Mammary epithelial cell (primary cell): ENCODE measurements at regions of chr3 and their contacts with region 1.

Region 1: GRCh38 chr3:151439652-151440129 is 21.2 kb downstream of the IGSF10 start:
- DNase-seq: peak; percentile 60
- H3K4me3 ChIP-seq: no peak overlapping the region
- H3K27ac ChIP-seq: no peak overlapping the region
- H3K4me1 ChIP-seq: no peaks in the 10 kb centered on the region
- H3K27me3 ChIP-seq: no peaks in the 10 kb centered on the region
- CTCF ChIP-seq: peak; percentile 73 to 80

Region 2: DNA sequence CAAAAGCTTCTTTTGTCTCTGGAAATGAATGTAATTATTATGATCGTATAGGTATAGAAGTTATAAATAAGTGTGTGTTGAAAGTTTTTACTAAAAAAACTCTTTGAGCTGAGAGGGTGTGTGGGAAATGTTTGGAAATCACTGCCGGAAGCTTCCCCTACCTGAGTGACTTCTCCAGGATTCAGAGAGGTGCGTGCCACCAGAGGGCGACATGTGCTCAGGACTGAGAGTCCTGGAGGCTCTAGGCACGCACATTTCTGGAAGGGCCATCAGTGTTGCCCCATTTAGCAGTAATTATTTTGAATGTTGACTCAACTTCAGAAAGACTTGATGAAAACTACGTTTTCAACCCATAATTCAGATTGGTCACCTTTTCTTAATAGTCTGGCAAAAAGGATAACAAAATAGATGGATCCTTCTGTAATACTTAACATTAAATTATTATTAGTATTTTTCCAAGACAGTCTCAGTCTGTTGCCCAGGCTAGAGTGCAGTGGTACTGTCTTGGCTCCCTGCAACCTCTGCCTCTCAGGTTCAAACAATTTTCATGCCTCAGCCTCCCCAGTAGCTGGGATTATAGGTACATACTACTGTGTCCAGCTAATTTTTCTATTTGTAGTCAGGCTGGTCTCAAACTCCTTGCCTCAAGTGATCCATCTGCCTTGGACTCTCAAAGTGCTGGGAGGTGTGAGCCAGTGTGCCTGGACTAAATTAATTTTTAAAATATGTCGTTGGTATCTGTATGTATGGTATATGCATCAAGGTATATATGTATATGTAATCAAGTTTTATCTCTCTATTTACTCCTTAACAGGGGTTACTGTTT is 271.2 kb before region 1 on chr3:
- CTCF ChIA-PET with region 1: no interaction called
- dilution Hi-C with region 1: no loop called
- in situ Hi-C with region 1: no loop called
- intact Hi-C with region 1: loop called (anchors 10 kb)
- DNase-seq: peak; percentile 48
- H3K4me3 ChIP-seq: no peak overlapping the region
- H3K27ac ChIP-seq: no peak overlapping the region
- H3K4me1 ChIP-seq: peaks cover 2% of the 10 kb centered on the region
- H3K27me3 ChIP-seq: no peaks in the 10 kb centered on the region
- CTCF ChIP-seq: peak; percentile 81 to 94

Region 3: GRCh38 chr3:151227807-151228665 is 211.7 kb before region 1 on chr3:
- CTCF ChIA-PET with region 1: no interaction called
- dilution Hi-C with region 1: no loop called
- in situ Hi-C with region 1: no loop called
- intact Hi-C with region 1: loop called (anchors 2 kb)
- DNase-seq: peak; percentile 63
- H3K4me3 ChIP-seq: no peak overlapping the region
- H3K27ac ChIP-seq: no peak overlapping the region
- H3K4me1 ChIP-seq: peaks cover 27% of the 10 kb centered on the region
- H3K27me3 ChIP-seq: no peaks in the 10 kb centered on the region
- CTCF ChIP-seq: peak; percentile 91 to 94

Region 4: GRCh38 chr3:151290673-151291072 is 149.0 kb before region 1 on chr3:
- CTCF ChIA-PET with region 1: no interaction called
- dilution Hi-C with region 1: no loop called
- in situ Hi-C with region 1: no loop called
- intact Hi-C with region 1: loop called (anchors 2 kb)
- DNase-seq: no peak
- H3K4me3 ChIP-seq: no peak overlapping the region
- H3K27ac ChIP-seq: no peak overlapping the region
- H3K4me1 ChIP-seq: no peaks in the 10 kb centered on the region
- H3K27me3 ChIP-seq: no peaks in the 10 kb centered on the region
- CTCF ChIP-seq: peak; percentile 48 to 57

Region 5: GRCh38 chr3:151452841-151453240 is 13.2 kb after region 1 on chr3:
- CTCF ChIA-PET with region 1: no interaction called
- dilution Hi-C with region 1: no loop called
- in situ Hi-C with region 1: no loop called
- intact Hi-C with region 1: no loop called
- DNase-seq: no peak
- H3K4me3 ChIP-seq: no peak overlapping the region
- H3K27ac ChIP-seq: no peak overlapping the region
- H3K4me1 ChIP-seq: no peaks in the 10 kb centered on the region
- H3K27me3 ChIP-seq: peaks cover 12% of the 10 kb centered on the region
- CTCF ChIP-seq: no peak

Region 6: DNA sequence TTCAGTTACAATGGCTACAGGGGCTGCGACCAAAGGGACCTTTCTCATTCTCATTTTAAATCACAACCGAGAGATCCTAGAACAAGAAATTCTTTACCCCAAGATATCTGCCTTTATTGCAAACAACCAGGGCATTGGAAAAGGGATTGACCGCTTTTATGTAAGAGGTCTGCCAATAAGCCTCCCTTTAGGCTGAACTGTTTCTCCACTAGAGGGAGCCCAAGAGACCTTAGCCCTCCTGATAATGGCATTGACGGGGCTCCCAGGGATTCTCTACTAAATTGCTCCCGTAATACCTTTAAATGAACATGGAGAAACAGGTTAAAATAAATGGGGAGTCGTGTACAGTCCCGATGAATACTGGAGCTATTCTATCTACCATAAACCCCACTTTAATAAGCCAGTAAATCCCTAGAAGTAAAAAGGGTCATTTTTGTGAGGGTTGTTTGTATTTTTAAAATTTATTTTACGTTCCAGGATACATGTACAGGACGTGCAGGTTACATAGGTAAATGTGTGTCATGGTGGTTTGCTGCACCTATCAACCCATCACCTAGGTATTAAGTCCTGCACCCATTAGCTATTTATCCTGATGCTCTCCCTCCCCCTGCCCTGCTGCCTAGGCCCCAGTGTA is 28.7 kb after region 1 on chr3:
- CTCF ChIA-PET with region 1: no interaction called
- dilution Hi-C with region 1: no loop called
- in situ Hi-C with region 1: no loop called
- intact Hi-C with region 1: loop called (anchors 2 kb)
- DNase-seq: peak; percentile 35
- H3K4me3 ChIP-seq: no peak overlapping the region
- H3K27ac ChIP-seq: no peak overlapping the region
- H3K4me1 ChIP-seq: no peaks in the 10 kb centered on the region
- H3K27me3 ChIP-seq: peaks cover 4% of the 10 kb centered on the region
- CTCF ChIP-seq: peak; percentile 91

Region 7: DNA sequence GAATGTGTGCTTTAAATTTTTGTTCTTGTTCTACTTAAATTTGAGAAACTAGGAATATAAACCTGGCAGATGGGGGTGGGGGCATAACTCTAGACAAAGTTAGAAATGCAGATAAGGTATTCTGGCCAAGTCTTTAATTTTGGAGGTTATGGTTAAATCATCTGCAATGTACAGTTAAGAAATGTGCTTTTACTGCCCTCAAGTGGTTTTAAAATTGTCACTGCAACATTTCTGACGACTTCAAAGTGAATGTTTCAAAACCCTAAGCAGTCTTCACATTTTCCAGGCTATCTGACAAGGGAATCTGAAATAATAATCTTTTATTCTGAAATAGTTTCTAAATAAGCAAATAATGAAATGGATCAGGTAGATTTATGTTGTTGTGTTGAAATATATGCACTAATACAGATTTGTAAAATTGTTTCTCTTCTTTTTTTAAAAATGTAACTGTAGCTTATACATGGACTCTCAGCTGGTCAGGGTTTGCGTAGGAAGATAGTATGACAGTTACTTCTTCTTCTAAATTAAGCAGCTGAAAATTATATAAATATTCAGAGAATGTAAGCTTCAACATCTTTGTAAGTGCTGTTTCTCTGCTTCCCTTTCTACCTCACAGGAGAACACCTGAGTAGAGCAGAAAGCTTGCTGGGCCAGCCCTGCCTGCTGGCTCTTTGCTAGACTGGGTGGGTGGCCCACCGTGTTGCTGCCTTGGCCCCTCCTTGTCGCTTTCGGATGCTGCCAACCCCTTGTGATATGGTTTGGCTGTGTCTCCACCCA is 478.8 kb after region 1 on chr3:
- CTCF ChIA-PET with region 1: no interaction called
- dilution Hi-C with region 1: no loop called
- in situ Hi-C with region 1: loop called (anchors 10 kb)
- intact Hi-C with region 1: loop called (anchors 1 kb)
- DNase-seq: peak; percentile 26
- H3K4me3 ChIP-seq: no peak overlapping the region
- H3K27ac ChIP-seq: no peak overlapping the region
- H3K4me1 ChIP-seq: no peaks in the 10 kb centered on the region
- H3K27me3 ChIP-seq: no peaks in the 10 kb centered on the region
- CTCF ChIP-seq: peak; percentile 63 to 67

Region 8: GRCh38 chr3:152466784-152467183 is 1027.1 kb after region 1 on chr3:
- CTCF ChIA-PET with region 1: no interaction called
- dilution Hi-C with region 1: no loop called
- in situ Hi-C with region 1: no loop called
- intact Hi-C with region 1: loop called (anchors 10 kb)
- DNase-seq: no peak
- H3K4me3 ChIP-seq: no peak overlapping the region
- H3K27ac ChIP-seq: no peak overlapping the region
- H3K4me1 ChIP-seq: no peaks in the 10 kb centered on the region
- H3K27me3 ChIP-seq: no peaks in the 10 kb centered on the region
- CTCF ChIP-seq: peak; percentile 51 to 52